ENCODE measurements at regions of chrX and their contacts with region 1.

Region 1: GRCh38 chrX:12999422-12999821 is 24.5 kb downstream of the TMSB4X start:
- DNase-seq: no peak
- ATAC-seq: peak in 1 of 4 donors; percentile 26
- H3K4me3 ChIP-seq: peak overlapping the region in 1 of 12 donors; percentile 1
- H3K27ac ChIP-seq: peak overlapping the region in 8 of 12 donors; percentile 21 to 81 (median 56)
- H3K4me1 ChIP-seq: peaks cover 0 to 66% (median 9%) of the 10 kb centered on the region in 12 donors
- H3K27me3 ChIP-seq: peaks cover 0 to 11% (median 0%) of the 10 kb centered on the region in 9 donors
- CTCF ChIP-seq: no peak
- POLR2A ChIP-seq: no peak

Region 2: DNA sequence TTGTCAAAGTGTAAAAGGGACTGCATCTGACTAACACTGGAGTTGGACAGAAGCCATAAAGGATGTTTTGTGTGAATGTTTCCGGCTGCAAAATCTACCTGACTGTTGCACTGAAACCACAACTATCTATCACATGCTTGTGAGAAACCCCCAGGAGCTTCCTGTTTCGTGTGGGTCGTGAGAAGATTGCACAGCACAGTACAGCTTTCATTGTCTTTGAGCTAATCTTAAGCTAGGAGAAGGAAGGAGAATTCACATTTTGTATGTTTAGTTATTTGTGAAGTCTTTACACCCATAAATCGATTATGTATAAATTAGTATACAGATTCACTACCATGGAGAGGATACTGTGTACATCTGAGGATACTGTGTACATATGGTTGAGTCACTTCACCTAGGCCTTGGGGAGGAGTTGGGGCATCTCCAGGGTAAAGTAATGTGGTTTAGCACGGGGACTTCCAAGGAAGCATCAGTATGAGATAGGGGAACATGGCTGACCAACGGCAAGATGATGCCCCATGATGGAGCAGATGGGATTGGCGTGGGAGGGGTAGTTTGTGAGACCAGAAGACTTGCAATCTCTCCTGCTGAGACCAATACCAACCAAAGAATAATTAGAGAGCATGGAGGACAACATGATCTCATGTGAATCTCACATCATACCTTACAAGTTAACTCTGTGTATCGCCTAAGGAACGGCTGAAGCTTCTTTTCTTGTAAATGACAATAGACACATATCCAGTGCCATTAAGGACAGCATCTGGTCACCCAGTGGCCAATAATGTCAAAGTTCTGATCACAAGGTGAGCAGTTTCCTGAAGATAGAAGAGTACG is 88.1 kb after region 1 on chrX:
- intact Hi-C with region 1: loop called in 1 of 10 experiments (anchors 10 kb)
- DNase-seq: no peak
- ATAC-seq: peak in 1 of 4 donors; percentile 63
- H3K4me3 ChIP-seq: no peak overlapping the region
- H3K27ac ChIP-seq: peak overlapping the region in 2 of 12 donors; percentile 37 to 90
- H3K4me1 ChIP-seq: peaks cover 0 to 91% (median under 1%) of the 10 kb centered on the region in 12 donors
- H3K27me3 ChIP-seq: no peaks in the 10 kb centered on the region
- CTCF ChIP-seq: no peak
- POLR2A ChIP-seq: no peak

Region 3: GRCh38 chrX:13622401-13622957 is 623.1 kb after region 1 on chrX:
- intact Hi-C with region 1: no loop called
- DNase-seq: no peak
- ATAC-seq: no peak
- H3K4me3 ChIP-seq: no peak overlapping the region
- H3K27ac ChIP-seq: no peak overlapping the region
- H3K4me1 ChIP-seq: no peaks in the 10 kb centered on the region
- H3K27me3 ChIP-seq: peaks cover 0 to 12% (median 0%) of the 10 kb centered on the region in 9 donors
- CTCF ChIP-seq: no peak
- POLR2A ChIP-seq: no peak